MCF 10A (cell line): ENCODE measurements at regions of chr7 and their contacts with region 1.

Region 1: DNA sequence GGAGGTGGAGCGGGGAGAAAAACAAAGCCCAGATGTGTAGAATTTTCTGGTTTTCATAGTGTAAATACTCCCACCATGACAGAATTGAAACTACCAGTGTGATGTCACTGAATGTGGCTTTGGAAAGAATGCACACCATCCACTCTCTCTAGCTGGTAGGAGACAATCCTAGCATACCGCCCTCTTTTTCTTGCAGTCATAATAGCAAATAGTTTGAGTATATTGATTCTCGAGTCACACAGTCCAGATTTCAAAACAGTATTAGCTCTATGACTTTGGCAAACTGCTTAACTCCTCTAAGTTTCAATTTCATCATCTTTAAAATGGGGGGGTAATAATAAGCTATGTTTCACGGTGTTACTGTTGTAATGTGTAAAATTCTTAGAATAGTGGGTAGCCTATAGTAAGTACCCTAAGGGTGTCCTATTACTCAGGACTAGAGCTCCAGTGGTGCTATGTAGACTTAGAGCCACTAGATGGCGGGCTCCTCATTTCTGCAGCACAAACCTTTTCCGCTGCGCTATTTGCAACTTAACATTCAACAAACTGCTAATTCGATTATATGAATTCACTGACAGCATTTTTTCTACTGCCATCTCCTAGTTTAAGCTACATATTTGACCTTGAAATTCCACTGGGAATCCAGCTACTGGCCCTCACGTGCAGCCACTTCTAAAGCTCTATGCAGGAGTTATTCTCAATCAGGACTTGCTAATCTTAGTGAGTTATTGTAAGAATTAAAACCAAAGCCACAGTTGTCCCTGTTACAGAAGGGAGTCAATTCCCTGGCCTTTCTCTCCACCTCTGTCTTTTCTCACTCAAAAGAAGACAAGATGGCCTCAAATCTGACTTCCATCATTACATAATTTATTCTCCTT is 18.7 kb downstream of the TAS2R40 start:
- DNase-seq: peak; percentile 82
- H3K4me3 Mint-ChIP-seq: peak overlapping the region; percentile 7
- H3K27ac Mint-ChIP-seq: peak overlapping the region; percentile 39
- H3K4me1 Mint-ChIP-seq: peaks cover 21% of the 10 kb centered on the region
- H3K27me3 Mint-ChIP-seq: peaks cover 21% of the 10 kb centered on the region
- CTCF ChIP-seq: peak; percentile 92

Region 2: DNA sequence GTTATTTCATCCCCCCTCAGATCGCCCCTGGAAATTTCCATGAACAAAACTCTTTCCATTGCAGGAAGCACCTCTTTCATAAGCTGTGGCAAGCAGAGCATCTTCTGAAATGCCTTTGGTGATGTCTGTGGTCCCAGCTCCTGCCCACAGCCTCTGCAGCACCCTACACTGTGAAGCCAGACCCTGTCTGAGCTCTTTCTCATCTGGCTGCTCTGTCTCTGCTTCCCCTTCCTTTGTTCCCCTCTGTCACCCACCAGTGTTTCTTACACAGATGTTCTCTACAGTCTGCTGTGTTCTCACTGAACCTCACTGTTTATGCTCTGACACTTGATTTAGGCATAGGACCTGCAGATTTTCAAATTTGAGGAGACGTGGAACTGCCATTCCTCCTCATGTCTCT is 59.2 kb before region 1 on chr7:
- CTCF ChIA-PET with region 1: no interaction called
- POLR2A ChIA-PET with region 1: no interaction called
- intact Hi-C with region 1: no loop called
- DNase-seq: no peak
- H3K4me3 Mint-ChIP-seq: no peak overlapping the region
- H3K27ac Mint-ChIP-seq: no peak overlapping the region
- H3K4me1 Mint-ChIP-seq: no peaks in the 10 kb centered on the region
- H3K27me3 Mint-ChIP-seq: peaks cover 31% of the 10 kb centered on the region
- CTCF ChIP-seq: no peak

Region 3: DNA sequence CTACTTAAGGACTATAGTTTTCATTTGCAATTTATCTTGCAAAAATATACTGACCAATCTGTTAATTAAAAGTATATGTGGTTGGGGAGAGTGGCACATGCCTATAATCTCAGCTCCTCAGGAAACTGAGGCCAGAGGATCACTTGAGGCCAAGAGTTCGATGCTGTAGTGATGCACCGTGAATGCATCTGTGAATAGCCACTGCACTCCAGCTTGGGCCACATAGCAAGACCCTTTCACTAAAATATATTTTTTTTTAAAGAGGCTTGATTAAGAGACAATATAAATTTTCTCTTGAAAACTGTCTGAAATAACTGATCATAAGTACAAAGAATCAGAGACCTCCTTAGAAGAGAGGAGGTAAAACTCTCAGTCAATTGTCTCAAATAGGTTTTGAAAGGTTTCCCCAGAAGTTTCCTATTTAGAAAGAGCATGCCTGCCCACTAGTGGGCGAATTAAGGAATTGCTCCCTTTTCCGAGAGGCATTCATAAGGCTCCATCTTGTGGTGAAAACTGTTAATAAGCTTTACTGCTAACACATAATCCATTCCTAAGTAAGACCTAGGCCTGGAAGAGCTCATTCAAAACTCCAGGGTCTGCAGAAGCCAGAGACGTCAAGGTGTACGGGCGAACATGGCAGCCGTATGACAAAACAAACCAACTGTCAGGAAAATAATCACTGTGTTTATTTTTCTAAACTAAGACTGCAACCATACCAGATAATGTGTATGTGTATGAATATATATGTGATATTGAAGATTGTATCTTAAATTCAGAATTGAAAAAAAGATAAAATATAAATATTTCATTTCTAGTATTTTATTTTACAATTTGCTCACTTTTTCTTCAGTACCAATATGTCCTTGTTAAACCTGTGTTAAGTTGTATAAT is 25.5 kb before region 1 on chr7:
- CTCF ChIA-PET with region 1: interaction called, 31 read pairs
- POLR2A ChIA-PET with region 1: interaction called, 3 read pairs
- intact Hi-C with region 1: no loop called
- DNase-seq: peak; percentile 89
- H3K4me3 Mint-ChIP-seq: no peak overlapping the region
- H3K27ac Mint-ChIP-seq: no peak overlapping the region
- H3K4me1 Mint-ChIP-seq: no peaks in the 10 kb centered on the region
- H3K27me3 Mint-ChIP-seq: peaks cover 25% of the 10 kb centered on the region
- CTCF ChIP-seq: peak; percentile 99

Region 4: GRCh38 chr7:143263266-143264195 is 23.0 kb after region 1 on chr7 and contains the start of gene GSTK1:
- CTCF ChIA-PET with region 1: interaction called, 128 read pairs
- POLR2A ChIA-PET with region 1: interaction called, 13 read pairs
- intact Hi-C with region 1: no loop called
- DNase-seq: peak; percentile 77
- H3K4me3 Mint-ChIP-seq: peak within 1 kb of the TSS; percentile 98
- H3K27ac Mint-ChIP-seq: peak within 1 kb of the TSS; percentile 92
- H3K4me1 Mint-ChIP-seq: peaks cover 29% of the 10 kb centered on the region
- H3K27me3 Mint-ChIP-seq: no peaks in the 10 kb centered on the region
- CTCF ChIP-seq: no peak
- total RNA-seq, gene GSTK1: 69.7 and 79.9 TPM in 2 replicates

Region 5: DNA sequence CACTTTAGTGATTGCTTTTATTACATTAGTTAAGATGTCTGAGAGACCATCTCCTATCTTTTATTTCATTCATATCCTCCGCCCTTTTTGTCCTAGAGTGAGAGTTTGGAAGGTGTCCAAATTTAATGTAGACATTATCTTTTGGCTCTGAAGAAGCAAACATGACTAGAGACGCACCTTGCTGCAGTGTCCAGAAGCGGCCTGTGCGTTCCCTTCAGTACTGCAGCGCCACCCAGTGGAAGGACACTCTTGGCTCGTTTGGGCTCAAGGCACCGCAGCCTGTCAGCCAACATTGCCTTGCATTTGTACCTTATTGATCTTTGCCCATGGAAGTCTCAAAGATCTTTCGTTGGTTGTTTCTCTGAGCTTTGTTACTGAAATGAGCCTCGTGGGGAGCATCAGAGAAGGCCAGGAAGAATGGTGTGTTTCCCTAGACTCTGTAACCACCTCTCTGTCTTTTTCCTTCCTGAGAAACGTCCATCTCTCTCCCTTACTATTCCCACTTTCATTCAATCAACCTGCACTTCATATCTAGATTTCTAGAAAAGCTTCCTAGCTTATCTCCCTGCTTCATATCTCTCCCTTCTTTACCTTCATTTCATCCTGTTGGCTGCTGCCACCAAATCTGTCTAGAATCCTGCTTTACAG is 65.0 kb after region 1 on chr7:
- CTCF ChIA-PET with region 1: interaction called, 30 read pairs
- POLR2A ChIA-PET with region 1: interaction called, 4 read pairs
- intact Hi-C with region 1: loop called (anchors 1 kb)
- DNase-seq: peak; percentile 70
- H3K4me3 Mint-ChIP-seq: no peak overlapping the region
- H3K27ac Mint-ChIP-seq: no peak overlapping the region
- H3K4me1 Mint-ChIP-seq: no peaks in the 10 kb centered on the region
- H3K27me3 Mint-ChIP-seq: no peaks in the 10 kb centered on the region
- CTCF ChIP-seq: peak; percentile 50

Region 6: DNA sequence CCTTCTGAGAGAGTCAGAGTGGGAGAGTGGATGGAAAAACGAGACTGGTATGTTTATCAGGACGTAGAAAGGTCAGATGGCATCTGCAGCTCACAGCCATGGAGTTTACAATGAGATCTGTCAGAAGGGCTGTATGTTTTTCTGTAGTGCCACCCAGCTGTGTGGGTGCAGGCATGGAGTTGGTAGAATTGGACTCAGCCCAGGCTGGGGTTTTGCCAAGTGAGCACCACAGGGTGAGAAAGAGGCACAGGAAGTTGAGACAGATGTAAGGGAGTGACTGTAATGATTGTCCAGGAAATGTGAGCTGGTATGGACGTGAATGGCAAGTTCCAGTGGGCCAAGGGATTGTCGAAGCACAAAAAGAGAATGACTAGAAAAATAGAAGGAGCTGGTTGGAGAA is 131.5 kb after region 1 on chr7:
- CTCF ChIA-PET with region 1: interaction called, 20 read pairs
- POLR2A ChIA-PET with region 1: interaction called, 3 read pairs
- intact Hi-C with region 1: no loop called
- DNase-seq: peak; percentile 96
- H3K4me3 Mint-ChIP-seq: no peak overlapping the region
- H3K27ac Mint-ChIP-seq: peak overlapping the region; percentile 13
- H3K4me1 Mint-ChIP-seq: peaks cover 37% of the 10 kb centered on the region
- H3K27me3 Mint-ChIP-seq: no peaks in the 10 kb centered on the region
- CTCF ChIP-seq: peak; percentile 15

Region 7: GRCh38 chr7:143416565-143417149 is 176.1 kb after region 1 on chr7:
- CTCF ChIA-PET with region 1: interaction called, 131 read pairs
- POLR2A ChIA-PET with region 1: interaction called, 9 read pairs
- intact Hi-C with region 1: loop called (anchors 1 kb)
- DNase-seq: peak; percentile 75
- H3K4me3 Mint-ChIP-seq: no peak overlapping the region
- H3K27ac Mint-ChIP-seq: no peak overlapping the region
- H3K4me1 Mint-ChIP-seq: peaks cover 32% of the 10 kb centered on the region
- H3K27me3 Mint-ChIP-seq: no peaks in the 10 kb centered on the region
- CTCF ChIP-seq: peak; percentile 73